GM12878 (cell line): ENCODE measurements at regions of chr2 and their contacts with region 1.

Region 1: DNA sequence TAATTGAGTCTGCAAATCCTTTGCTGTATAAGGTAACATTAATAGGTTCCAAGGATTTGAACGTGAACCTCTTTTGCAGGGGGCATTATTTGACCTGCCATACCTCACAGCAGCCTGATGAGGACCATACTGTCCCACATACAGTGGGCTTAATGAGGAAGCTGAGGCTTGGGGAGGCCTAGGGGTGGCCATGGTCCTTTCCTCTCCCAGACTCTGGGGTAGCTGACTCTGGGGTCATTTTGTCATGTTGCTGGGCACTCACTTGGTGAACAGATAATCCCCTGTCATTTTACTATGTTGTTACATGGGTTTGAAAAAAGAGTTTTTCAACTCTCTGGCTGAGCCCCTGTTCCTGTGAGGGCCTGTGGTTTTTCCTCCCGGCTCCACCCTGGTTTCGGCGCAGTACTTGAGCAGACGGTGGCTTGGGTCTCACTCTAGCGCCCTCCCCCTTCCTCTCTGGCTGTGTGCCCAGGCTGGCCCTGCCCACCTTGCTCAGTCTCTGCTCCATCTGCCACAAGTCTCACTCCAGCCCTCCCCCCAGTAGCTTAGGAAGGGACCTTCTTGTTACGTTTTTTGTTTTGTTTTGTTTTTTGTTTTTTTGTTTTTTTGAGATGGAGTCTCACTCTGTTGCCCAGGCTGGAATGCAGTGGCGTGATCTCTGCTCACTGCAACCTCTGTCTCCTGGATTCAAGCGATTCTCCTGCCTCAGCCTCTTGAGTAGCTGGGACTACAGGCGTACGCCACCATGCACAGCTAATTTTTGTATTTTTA is 21.0 kb downstream of the INPP4A start:
- DNase-seq: peak; percentile 91
- ATAC-seq: peak; percentile 58
- H3K4me3 ChIP-seq: peak overlapping the region; percentile 42; the same call in 1 of the 2 replicates
- H3K27ac ChIP-seq: peak overlapping the region; percentile 99
- H3K4me1 ChIP-seq: peaks cover 83% of the 10 kb centered on the region
- H3K27me3 ChIP-seq: no peaks in the 10 kb centered on the region
- CTCF ChIP-seq: no peak
- EP300 ChIP-seq: peak; percentile 49 to 59; a peak in 2 of 4 replicates
- POLR2A ChIP-seq: peak; percentile 39; the same call in 1 of the 2 replicates
- RAD21 ChIP-seq: 0 out of 2 replicates have a peak, but pooled peaks have one; percentile 1

Region 2: GRCh38 chr2:98412751-98413458 is 52.7 kb before region 1 on chr2:
- CTCF ChIA-PET with region 1: interaction called, 8 read pairs
- POLR2A ChIA-PET with region 1: no interaction called
- RAD21 ChIA-PET with region 1: interaction called, 10 read pairs
- SMC1A ChIA-PET with region 1: interaction called, 11 read pairs
- in situ Hi-C with region 1: no loop called
- intact Hi-C with region 1: loop called (anchors 2 kb)
- DNase-seq: peak; percentile 54
- ATAC-seq: peak; percentile 98
- H3K4me3 ChIP-seq: no peak overlapping the region
- H3K27ac ChIP-seq: no peak overlapping the region
- H3K4me1 ChIP-seq: no peaks in the 10 kb centered on the region; the same call in 1 of the 2 replicates
- H3K27me3 ChIP-seq: no peaks in the 10 kb centered on the region; a peak in 1 of 4 replicates
- CTCF ChIP-seq: peak; percentile 65 to 81 (median 80)
- EP300 ChIP-seq: no peak
- POLR2A ChIP-seq: no peak
- RAD21 ChIP-seq: peak; percentile 94

Region 3: GRCh38 chr2:98455494-98455976 is 10.1 kb before region 1 on chr2:
- CTCF ChIA-PET with region 1: interaction called, 32 read pairs
- POLR2A ChIA-PET with region 1: interaction called, 271 read pairs
- RAD21 ChIA-PET with region 1: interaction called, 199 read pairs
- SMC1A ChIA-PET with region 1: interaction called, 425 read pairs
- in situ Hi-C with region 1: no loop called
- intact Hi-C with region 1: no loop called
- DNase-seq: peak; percentile 68
- ATAC-seq: peak; percentile 53
- H3K4me3 ChIP-seq: peak overlapping the region; percentile 58; the same call in 1 of the 2 replicates
- H3K27ac ChIP-seq: peak overlapping the region; percentile 77
- H3K4me1 ChIP-seq: peaks cover 82% of the 10 kb centered on the region
- H3K27me3 ChIP-seq: no peaks in the 10 kb centered on the region
- CTCF ChIP-seq: no peak
- EP300 ChIP-seq: no peak
- POLR2A ChIP-seq: 0 out of 2 replicates have a peak, but pooled peaks have one; percentile 35
- RAD21 ChIP-seq: no peak

Region 4: DNA sequence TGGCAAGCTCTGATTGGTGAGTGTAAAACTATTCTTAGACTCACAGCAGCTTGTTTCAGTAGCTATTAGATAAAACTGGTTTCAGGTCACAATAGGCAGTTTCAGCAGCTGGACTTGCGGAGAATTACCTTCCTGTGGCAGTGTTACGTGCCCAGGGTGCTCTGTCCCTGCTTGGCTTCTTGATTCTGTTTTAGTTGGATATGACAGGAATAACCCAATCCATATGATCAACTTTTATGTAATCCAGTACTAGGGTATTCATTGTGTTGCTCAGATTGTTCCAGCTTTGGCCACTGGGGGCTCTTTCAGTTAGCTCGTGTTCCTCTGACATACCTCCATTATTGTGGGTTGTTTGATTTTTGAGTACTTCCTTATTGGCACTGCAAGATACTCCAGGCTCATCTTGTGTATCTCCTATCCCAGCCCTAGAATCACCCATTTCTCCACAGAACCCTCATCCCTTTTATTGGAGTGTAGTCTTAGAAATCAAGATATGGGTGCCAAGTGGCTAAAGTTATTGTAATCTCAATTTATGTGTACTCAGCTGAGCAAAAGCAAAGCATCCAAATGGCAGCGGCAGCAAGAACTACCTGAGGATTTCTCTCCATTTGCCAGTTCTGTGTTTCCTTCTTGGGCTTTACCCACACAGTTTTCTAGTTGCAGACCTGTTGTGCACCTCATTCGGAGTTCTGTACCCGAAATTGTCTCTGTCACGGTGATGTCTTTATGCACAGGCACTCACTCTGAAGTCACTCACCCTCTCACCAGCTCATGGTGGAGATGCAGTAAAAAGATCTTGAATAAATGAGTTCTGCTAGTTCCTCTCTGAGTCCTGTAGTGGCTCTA is 22.4 kb after region 1 on chr2:
- CTCF ChIA-PET with region 1: interaction called, 64 read pairs
- POLR2A ChIA-PET with region 1: interaction called, 545 read pairs
- RAD21 ChIA-PET with region 1: interaction called, 200 read pairs
- SMC1A ChIA-PET with region 1: interaction called, 816 read pairs
- in situ Hi-C with region 1: no loop called
- intact Hi-C with region 1: loop called (anchors 1 kb)
- DNase-seq: peak; percentile 92
- ATAC-seq: peak; percentile 69
- H3K4me3 ChIP-seq: peak overlapping the region; percentile 17; the same call in 1 of the 2 replicates
- H3K27ac ChIP-seq: peak overlapping the region; percentile 78
- H3K4me1 ChIP-seq: peaks cover 77% of the 10 kb centered on the region
- H3K27me3 ChIP-seq: no peaks in the 10 kb centered on the region
- CTCF ChIP-seq: peak; percentile 32 to 55 (median 49)
- EP300 ChIP-seq: peak in 1 of 2 experiments; percentile 69; a peak in 2 of 4 replicates
- POLR2A ChIP-seq: peak; percentile 57; the same call in 1 of the 2 replicates
- RAD21 ChIP-seq: no peak

Region 5: GRCh38 chr2:98548920-98549818 is 83.5 kb after region 1 on chr2:
- CTCF ChIA-PET with region 1: interaction called, 3 read pairs
- POLR2A ChIA-PET with region 1: interaction called, 3 read pairs
- RAD21 ChIA-PET with region 1: no interaction called
- SMC1A ChIA-PET with region 1: interaction called, 3 read pairs
- in situ Hi-C with region 1: no loop called
- intact Hi-C with region 1: loop called (anchors 5 kb)
- DNase-seq: no peak
- ATAC-seq: peak; percentile 72
- H3K4me3 ChIP-seq: no peak overlapping the region
- H3K27ac ChIP-seq: peak overlapping the region; percentile 67
- H3K4me1 ChIP-seq: peaks cover 54% of the 10 kb centered on the region
- H3K27me3 ChIP-seq: no peaks in the 10 kb centered on the region
- CTCF ChIP-seq: no peak
- EP300 ChIP-seq: no peak
- POLR2A ChIP-seq: no peak
- RAD21 ChIP-seq: no peak

Region 6: GRCh38 chr2:98757904-98758421 is 292.3 kb after region 1 on chr2:
- CTCF ChIA-PET with region 1: no interaction called
- POLR2A ChIA-PET with region 1: no interaction called
- RAD21 ChIA-PET with region 1: no interaction called
- SMC1A ChIA-PET with region 1: no interaction called
- in situ Hi-C with region 1: no loop called
- intact Hi-C with region 1: loop called (anchors 5 kb)
- DNase-seq: peak; percentile 81
- ATAC-seq: peak; percentile 89
- H3K4me3 ChIP-seq: 0 out of 2 replicates have a peak overlapping the region, but pooled peaks have one; percentile 17
- H3K27ac ChIP-seq: peak overlapping the region; percentile 35
- H3K4me1 ChIP-seq: peaks cover 40% of the 10 kb centered on the region
- H3K27me3 ChIP-seq: no peaks in the 10 kb centered on the region
- CTCF ChIP-seq: no peak
- EP300 ChIP-seq: peak in 1 of 2 experiments; percentile 29; a peak in 2 of 4 replicates
- POLR2A ChIP-seq: no peak
- RAD21 ChIP-seq: no peak